ENCODE measurements at regions of chr14 and their contacts with region 1.

Region 1: GRCh38 chr14:97978341-97978740 is 1181.2 kb downstream of the VRK1 start:
- DNase-seq: peak; percentile 81
- H3K4me3 Mint-ChIP-seq: peak overlapping the region; percentile 88
- H3K27ac Mint-ChIP-seq: peak overlapping the region; percentile 97
- H3K4me1 Mint-ChIP-seq: peaks cover 55% of the 10 kb centered on the region
- H3K27me3 Mint-ChIP-seq: no peaks in the 10 kb centered on the region

Region 2: GRCh38 chr14:97994020-97994531 is 15.7 kb after region 1 on chr14:
- CTCF ChIA-PET with region 1: interaction called, 14 read pairs
- POLR2A ChIA-PET with region 1: interaction called, 6 read pairs
- DNase-seq: peak; percentile 44
- H3K4me3 Mint-ChIP-seq: peak overlapping the region; percentile 29
- H3K27ac Mint-ChIP-seq: peak overlapping the region; percentile 95
- H3K4me1 Mint-ChIP-seq: peaks cover 44% of the 10 kb centered on the region
- H3K27me3 Mint-ChIP-seq: no peaks in the 10 kb centered on the region

Region 3: GRCh38 chr14:98137131-98138025 is 159.0 kb after region 1 on chr14:
- CTCF ChIA-PET with region 1: interaction called, 11 read pairs
- POLR2A ChIA-PET with region 1: interaction called, 6 read pairs
- DNase-seq: no peak
- H3K4me3 Mint-ChIP-seq: peak overlapping the region; percentile 67
- H3K27ac Mint-ChIP-seq: peak overlapping the region; percentile 96
- H3K4me1 Mint-ChIP-seq: peaks cover 78% of the 10 kb centered on the region
- H3K27me3 Mint-ChIP-seq: no peaks in the 10 kb centered on the region

Region 4: DNA sequence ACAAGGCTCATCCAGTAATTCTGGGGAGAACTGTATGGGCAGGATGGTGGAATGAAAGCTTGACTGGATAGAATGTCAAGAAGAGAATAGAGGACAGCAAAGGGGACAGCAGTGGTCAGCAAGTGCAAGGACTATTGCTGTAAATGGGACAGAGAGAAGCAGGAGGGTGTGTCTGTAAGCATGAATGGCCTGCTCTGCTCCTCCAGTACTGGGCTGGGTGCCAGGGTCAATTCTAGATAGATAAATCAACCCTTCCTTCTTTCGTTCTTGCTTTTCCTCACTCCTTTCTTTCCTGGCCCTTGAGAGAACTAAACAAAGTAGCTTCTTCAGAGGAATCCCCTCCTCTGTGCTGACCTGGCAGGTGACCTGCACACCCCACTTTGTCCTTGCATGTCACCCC is 274.5 kb after region 1 on chr14:
- CTCF ChIA-PET with region 1: no interaction called
- POLR2A ChIA-PET with region 1: no interaction called
- DNase-seq: no peak
- H3K4me3 Mint-ChIP-seq: no peak overlapping the region
- H3K27ac Mint-ChIP-seq: no peak overlapping the region
- H3K4me1 Mint-ChIP-seq: peaks cover 3% of the 10 kb centered on the region
- H3K27me3 Mint-ChIP-seq: no peaks in the 10 kb centered on the region

Region 5: DNA sequence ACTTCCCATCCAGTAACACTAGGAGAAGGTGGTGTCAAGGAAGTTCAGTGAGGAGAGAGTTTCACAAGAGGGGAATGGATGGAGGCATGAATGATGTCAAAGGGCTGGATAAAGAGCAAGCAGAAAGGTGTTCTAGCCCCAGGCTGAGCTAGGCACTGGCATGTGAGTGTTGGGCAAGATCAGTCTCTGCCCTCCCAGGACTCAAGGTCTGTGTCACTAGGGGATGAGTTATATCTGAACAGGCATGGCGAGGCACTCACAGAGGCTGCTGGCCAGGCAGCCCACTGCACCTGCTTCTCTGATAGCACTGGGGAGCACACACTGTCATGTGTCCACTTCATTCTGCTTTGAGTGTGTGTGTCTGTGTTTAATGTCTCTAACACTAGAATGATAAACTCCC is 389.9 kb after region 1 on chr14:
- CTCF ChIA-PET with region 1: no interaction called
- POLR2A ChIA-PET with region 1: no interaction called
- DNase-seq: no peak
- H3K4me3 Mint-ChIP-seq: no peak overlapping the region
- H3K27ac Mint-ChIP-seq: no peak overlapping the region
- H3K4me1 Mint-ChIP-seq: peaks cover 8% of the 10 kb centered on the region
- H3K27me3 Mint-ChIP-seq: no peaks in the 10 kb centered on the region